PC-9 (cell line): ENCODE measurements at regions of chr19 and their contacts with region 1.

Region 1: GRCh38 chr19:18571564-18572300 is at the start of gene UBA52:
- DNase-seq: peak; percentile 95 to 99
- H3K4me3 ChIP-seq: peak within 1 kb of the TSS; percentile 91
- H3K27ac ChIP-seq: peak within 1 kb of the TSS; percentile 74
- H3K4me1 ChIP-seq: peaks cover 18% of the 10 kb centered on the region
- H3K27me3 ChIP-seq: no peaks in the 10 kb centered on the region
- CTCF ChIP-seq: no peak
- total RNA-seq, gene UBA52: 1,141 and 1,151 TPM in 2 replicates

Region 2: DNA sequence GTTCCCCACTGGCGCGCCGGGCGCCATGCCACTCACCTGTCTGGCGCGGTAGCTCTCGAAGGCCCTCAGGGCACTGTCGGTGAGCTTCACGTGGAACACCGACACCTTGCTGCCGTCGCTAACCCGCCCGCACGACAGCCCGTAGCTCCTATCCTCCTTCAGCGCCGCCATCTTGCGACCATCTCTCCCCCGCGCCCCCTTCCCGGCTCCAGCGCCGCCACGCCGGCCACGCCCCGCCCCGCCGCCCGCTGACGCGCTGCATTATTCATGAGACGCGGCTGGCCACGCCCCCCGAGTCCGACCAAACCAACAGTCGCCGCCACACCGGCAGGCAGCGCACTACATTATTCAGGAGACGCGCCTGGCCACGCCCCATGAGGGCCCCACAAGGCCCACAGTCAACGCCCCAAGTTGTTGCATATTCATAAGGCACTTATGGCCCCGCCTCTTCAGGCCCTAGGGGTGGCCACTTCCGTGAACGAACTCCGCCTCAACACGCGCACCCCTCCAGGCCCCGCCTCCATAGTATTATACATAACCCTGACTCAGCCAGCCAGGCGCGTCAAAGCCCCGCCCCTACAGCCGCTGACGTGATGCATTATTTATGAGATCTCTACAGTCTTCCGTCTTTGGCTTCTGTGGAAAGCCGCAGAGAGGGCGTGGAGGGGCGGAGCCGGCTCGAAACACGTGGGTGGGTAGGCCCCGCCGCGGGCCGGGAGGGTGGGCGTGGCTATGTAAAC is 49.7 kb before region 1 on chr19 and contains the start of gene ELL:
- CTCF ChIA-PET with region 1: interaction called, 3 read pairs
- POLR2A ChIA-PET with region 1: interaction called, 8 read pairs
- intact Hi-C with region 1: loop called (anchors 1 kb)
- DNase-seq: peak; percentile 99
- H3K4me3 ChIP-seq: peak within 1 kb of the TSS; percentile 94
- H3K27ac ChIP-seq: peak within 1 kb of the TSS; percentile 75
- H3K4me1 ChIP-seq: peaks cover 31% of the 10 kb centered on the region
- H3K27me3 ChIP-seq: no peaks in the 10 kb centered on the region
- CTCF ChIP-seq: no peak
- total RNA-seq, gene ELL: 12.9 and 14.6 TPM in 2 replicates

Region 3: GRCh38 chr19:18532168-18532890 is 39.4 kb before region 1 on chr19:
- CTCF ChIA-PET with region 1: no interaction called
- POLR2A ChIA-PET with region 1: no interaction called
- intact Hi-C with region 1: no loop called
- DNase-seq: no peak
- H3K4me3 ChIP-seq: no peak overlapping the region
- H3K27ac ChIP-seq: no peak overlapping the region
- H3K4me1 ChIP-seq: no peaks in the 10 kb centered on the region
- H3K27me3 ChIP-seq: no peaks in the 10 kb centered on the region
- CTCF ChIP-seq: no peak

Region 4: DNA sequence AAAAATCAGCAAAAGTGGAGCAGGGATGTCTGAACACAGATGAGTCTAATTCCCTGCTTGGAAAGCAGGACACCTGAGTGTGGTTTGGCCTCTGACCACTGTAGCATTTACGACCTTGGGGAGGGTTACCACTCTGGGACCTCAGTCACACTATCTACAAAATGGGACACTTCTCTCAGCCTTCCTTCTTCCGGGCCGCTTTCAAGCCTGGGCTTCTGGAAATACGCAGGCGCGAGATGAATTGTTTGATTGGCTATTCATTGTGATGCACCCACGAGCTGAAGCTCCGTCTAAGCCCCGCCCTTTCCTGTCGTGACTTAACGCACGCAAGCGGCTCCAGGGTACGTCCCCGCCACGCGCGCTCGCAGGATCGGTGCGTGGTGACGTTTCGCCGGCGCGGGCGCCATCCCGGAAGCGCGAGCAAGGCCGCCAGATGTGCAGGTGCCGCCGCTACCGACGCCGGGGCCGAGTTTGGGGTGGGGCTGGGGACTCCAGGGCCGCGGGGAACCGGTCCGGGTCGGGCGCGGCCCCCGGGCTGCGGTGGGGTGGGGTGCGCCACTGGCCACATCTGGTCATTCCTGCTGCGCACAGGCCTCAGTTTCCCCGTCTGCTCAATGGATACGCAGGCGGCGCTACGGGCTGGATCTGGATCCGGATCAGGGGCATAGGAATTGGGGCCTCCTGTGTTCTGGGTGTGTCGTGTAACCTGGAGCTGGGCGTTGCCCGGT is 14.1 kb before region 1 on chr19 and contains the start of gene KXD1:
- CTCF ChIA-PET with region 1: interaction called, 10 read pairs
- POLR2A ChIA-PET with region 1: interaction called, 8 read pairs
- intact Hi-C with region 1: no loop called
- DNase-seq: peak; percentile 93 to 94
- H3K4me3 ChIP-seq: peak within 1 kb of the TSS; percentile 95
- H3K27ac ChIP-seq: peak within 1 kb of the TSS; percentile 78
- H3K4me1 ChIP-seq: 0 out of 2 replicates have a peak, but pooled peaks cover 10% of the 10 kb centered on the region
- H3K27me3 ChIP-seq: no peaks in the 10 kb centered on the region
- CTCF ChIP-seq: 0 out of 2 replicates have a peak, but pooled peaks have one; percentile 17
- total RNA-seq, gene KXD1: 97.0 and 101 TPM in 2 replicates

Region 5: DNA sequence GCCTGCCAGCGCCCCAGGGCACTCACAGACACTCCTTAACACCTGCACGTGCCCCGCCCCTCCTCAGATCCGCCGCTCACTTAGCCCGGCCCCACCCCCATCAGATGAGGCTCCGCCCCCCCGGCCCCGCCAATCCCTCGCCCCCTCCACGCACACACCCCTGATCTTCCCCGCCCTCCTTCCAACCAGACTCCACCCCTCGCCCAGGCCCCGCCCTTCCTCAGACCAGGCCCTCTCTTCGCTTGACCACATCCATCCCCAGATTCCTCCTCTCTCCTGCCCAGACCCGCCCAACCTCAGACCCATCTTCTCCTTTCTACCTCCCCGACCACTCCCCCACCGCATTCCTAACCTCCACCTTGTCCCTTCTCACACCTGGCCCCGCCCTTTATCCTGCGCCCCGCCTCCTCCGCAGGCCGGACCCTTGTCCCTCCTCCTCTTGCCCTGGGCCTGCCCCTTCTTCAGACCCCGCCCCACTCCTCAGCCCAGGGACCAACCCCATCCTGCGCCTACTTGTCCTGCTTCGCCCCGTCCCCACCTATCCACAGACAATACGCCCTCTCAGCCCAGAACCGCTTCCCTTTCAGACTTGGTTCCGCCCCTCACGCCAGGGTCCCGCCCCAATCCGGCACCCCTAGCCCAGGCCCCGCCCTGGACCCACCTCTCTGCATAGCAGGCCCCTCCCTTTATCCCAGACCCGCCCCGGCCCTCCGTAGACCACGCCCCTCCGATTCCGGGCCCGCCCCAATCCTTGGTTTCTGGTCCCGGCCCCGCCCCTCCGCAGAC is 64.6 kb after region 1 on chr19:
- CTCF ChIA-PET with region 1: no interaction called
- POLR2A ChIA-PET with region 1: interaction called, 23 read pairs
- intact Hi-C with region 1: no loop called
- DNase-seq: peak; percentile 91 to 98
- H3K4me3 ChIP-seq: peak overlapping the region; percentile 94
- H3K27ac ChIP-seq: no peak overlapping the region
- H3K4me1 ChIP-seq: peaks cover 18% of the 10 kb centered on the region
- H3K27me3 ChIP-seq: no peaks in the 10 kb centered on the region
- CTCF ChIP-seq: no peak

Region 6: DNA sequence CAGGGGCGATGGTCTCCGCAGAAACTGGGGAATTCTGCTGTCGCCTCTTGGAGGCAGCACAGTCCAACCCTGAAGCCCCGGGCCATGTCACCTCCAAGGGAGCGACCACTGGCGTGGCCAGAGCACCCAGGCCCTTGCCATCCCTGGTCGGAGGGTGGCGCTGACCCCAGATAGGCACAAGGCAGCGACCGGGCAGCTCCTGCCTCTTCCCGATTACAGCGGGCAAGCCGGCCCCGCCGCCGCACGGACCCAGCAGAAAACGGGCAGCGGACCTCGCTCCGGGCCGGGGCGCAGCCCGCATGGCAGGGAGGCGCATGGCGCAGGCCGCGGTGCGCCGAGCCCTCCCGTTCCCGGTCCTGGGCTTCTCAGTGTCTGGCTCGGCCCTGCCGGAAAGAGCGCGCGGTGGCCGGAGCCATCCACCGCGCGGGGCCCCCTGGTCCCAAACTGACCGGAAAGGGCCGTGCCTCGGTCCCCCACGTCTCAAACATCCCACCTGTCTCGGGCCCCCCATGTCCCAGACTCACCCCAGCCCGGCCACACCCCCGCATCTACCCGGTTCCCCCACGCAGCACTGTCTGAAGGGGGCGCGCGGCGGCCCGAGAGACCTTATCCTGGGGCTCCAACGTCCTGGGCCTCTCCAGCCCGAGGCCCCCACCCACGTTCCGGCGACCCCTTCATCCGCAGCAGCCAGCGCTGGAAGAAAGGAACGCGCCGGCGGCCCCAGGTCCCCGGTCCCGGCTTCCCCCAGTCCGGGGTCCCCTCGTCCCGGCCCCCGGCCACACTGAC is 323.5 kb after region 1 on chr19:
- CTCF ChIA-PET with region 1: interaction called, 16 read pairs
- POLR2A ChIA-PET with region 1: interaction called, 4 read pairs
- intact Hi-C with region 1: no loop called
- DNase-seq: peak; percentile 68 to 71
- H3K4me3 ChIP-seq: peak overlapping the region; percentile 67
- H3K27ac ChIP-seq: no peak overlapping the region
- H3K4me1 ChIP-seq: no peaks in the 10 kb centered on the region
- H3K27me3 ChIP-seq: no peaks in the 10 kb centered on the region
- CTCF ChIP-seq: peak; percentile 70

Region 7: GRCh38 chr19:18919086-18919899 is 347.6 kb after region 1 on chr19 and contains the starts of genes COPE and DDX49:
- CTCF ChIA-PET with region 1: no interaction called
- POLR2A ChIA-PET with region 1: no interaction called
- intact Hi-C with region 1: loop called (anchors 10 kb)
- DNase-seq: peak; percentile 95 to 100
- H3K4me3 ChIP-seq: peak within 1 kb of the TSS; percentile 72
- H3K27ac ChIP-seq: peak within 1 kb of the TSS; percentile 75
- H3K4me1 ChIP-seq: peaks cover 17% of the 10 kb centered on the region
- H3K27me3 ChIP-seq: no peaks in the 10 kb centered on the region
- CTCF ChIP-seq: no peak
- total RNA-seq, gene COPE: 190 and 221 TPM in 2 replicates
- total RNA-seq, gene DDX49: 41.2 and 46.3 TPM in 2 replicates